Gastrocnemius medialis (tissue), 4 donors: ENCODE measurements at regions of chr6 and their contacts with region 1.

Region 1: DNA sequence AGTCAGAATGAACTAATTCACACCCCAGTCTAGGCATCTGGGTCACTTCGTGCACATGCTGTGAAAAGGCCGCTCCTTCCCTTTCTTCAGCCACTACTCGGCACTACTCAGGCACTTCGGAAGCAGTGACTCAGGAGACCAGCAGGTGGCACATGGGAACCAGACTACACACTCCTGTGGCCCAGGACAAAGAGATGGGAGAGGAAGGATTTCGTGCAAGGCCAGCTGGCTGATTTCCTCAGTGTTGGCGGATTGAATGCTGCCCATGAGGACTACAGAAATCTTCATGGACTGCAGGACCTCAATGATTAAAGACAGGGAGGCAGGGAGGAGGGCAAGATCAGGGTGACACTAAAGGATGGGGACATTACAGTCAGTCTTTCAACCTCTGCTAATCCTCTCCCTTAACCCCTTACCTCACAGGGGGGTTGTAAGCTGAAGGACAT is 117.8 kb upstream of the SPACA1 start:
- DNase-seq: peak; percentile 58 to 73
- ATAC-seq: peak; percentile 90 to 93
- H3K4me3 ChIP-seq: no peak overlapping the region
- H3K27ac ChIP-seq: no peak overlapping the region
- H3K4me1 ChIP-seq: no peaks in the 10 kb centered on the region
- H3K27me3 ChIP-seq: no peaks in the 10 kb centered on the region
- CTCF ChIP-seq: peak; percentile 57 to 81 (median 75)
- POLR2A ChIP-seq: no peak

Region 2: GRCh38 chr6:88492824-88493223 is 563.0 kb after region 1 on chr6:
- in situ Hi-C with region 1: no loop called
- intact Hi-C with region 1: loop called (anchors 5 kb)
- DNase-seq: no peak
- ATAC-seq: no peak
- H3K4me3 ChIP-seq: no peak overlapping the region
- H3K27ac ChIP-seq: peak overlapping the region in 1 of 4 donors; percentile 63
- H3K4me1 ChIP-seq: no peaks in the 10 kb centered on the region
- H3K27me3 ChIP-seq: no peaks in the 10 kb centered on the region
- CTCF ChIP-seq: peak in 4 of 5 experiments; percentile 22 to 32 (median 31)
- POLR2A ChIP-seq: no peak

Region 3: DNA sequence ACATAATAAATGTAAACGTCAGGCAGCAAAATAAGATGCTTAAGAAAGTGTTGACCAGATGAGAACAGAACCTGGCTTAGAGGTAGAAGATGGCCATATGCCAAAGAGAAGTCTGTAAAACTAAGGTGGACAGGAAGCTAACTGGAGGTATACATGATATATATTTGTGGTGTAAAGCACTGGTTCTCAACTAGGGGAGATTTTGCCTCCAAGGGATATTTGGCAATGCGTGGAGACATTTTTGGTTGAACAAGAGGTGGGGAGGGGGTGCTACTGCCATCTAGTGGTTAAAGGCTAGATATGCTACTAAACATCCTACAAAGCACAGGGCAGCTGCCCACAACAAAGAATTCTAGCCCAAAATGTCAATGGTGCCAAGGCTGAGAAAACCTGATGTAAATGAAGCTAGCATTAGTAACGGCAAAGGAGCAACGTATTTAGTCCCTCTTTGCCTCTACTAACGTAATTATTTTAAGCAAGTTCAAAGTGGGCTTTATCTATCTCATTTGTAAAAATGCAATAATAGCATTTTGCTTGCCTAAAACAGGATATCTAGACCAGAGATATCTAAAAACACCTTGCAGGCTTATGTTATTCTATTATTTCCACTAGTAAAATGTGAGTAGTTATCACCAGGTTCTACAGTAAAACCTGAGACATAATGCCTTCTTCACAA is 851.0 kb after region 1 on chr6:
- in situ Hi-C with region 1: no loop called
- intact Hi-C with region 1: loop called (anchors 5 kb)
- DNase-seq: peak in 1 of 2 donors; percentile 7
- ATAC-seq: peak in 1 of 2 donors; percentile 58
- H3K4me3 ChIP-seq: no peak overlapping the region
- H3K27ac ChIP-seq: no peak overlapping the region
- H3K4me1 ChIP-seq: no peaks in the 10 kb centered on the region
- H3K27me3 ChIP-seq: no peaks in the 10 kb centered on the region
- CTCF ChIP-seq: peak in 4 of 5 experiments; percentile 64 to 83 (median 74)
- POLR2A ChIP-seq: no peak

Region 4: GRCh38 chr6:88870717-88871330 is 941.0 kb after region 1 on chr6:
- in situ Hi-C with region 1: loop called in 3 of 4 experiments (anchors 5 to 10 kb)
- intact Hi-C with region 1: loop called (anchors 1 kb)
- DNase-seq: no peak
- ATAC-seq: peak; percentile 36 to 58
- H3K4me3 ChIP-seq: no peak overlapping the region
- H3K27ac ChIP-seq: no peak overlapping the region
- H3K4me1 ChIP-seq: peaks cover 8 to 13% of the 10 kb centered on the region in 2 donors
- H3K27me3 ChIP-seq: no peaks in the 10 kb centered on the region
- CTCF ChIP-seq: peak; percentile 53 to 71 (median 67)
- POLR2A ChIP-seq: no peak